ENCODE measurements at regions of chr10 and their contacts with region 1.

Region 1: GRCh38 chr10:102225646-102226541 is at the start of gene ELOVL3:
- DNase-seq: peak; percentile 96
- H3K4me3 ChIP-seq: peak within 1 kb of the TSS; percentile 5
- H3K27ac ChIP-seq: peak within 1 kb of the TSS; percentile 51
- H3K4me1 ChIP-seq: peaks cover 15% of the 10 kb centered on the region
- H3K27me3 ChIP-seq: peaks cover 10% of the 10 kb centered on the region
- CTCF ChIP-seq: no peak
- total RNA-seq, gene ELOVL3: 0.44 TPM in 1 of 2 replicates, not detected in the other

Region 2: DNA sequence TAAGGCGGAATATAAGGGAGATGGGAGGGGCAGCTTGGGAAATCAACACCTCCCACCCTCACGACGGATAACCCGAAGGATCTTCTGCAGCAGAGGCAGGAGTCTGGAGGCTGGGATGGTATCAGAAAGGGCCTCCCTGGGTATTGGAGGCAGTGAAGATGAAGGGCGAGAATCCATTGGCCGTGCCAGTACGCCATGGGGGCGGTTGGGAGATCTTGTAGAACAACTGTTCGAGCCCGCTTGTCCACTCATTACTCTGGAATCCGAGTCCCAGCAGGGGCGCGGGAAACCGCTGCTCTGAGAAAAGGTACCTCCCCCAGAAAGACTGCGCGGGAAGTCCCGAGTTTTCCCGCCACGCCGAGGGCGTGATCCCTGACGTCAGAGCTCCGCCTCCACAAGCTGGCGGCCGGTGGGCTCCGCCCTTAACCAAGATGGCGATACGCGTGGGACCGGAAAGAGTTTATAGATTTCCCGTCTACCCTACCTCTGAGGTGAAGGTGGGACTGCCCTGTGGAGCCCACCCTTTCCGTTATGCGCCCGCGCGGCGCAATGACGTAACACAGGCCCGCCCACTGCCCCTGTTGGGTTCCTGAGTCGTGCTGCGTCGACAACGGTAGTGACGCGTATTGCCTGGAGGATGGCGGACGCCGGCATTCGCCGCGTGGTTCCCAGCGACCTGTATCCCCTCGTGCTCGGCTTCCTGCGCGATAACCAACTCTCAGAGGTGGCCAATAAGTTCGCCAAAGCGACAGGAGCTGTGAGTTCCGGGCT is 73.9 kb before region 1 on chr10 and contains the start of gene NOLC1:
- CTCF ChIA-PET with region 1: no interaction called
- POLR2A ChIA-PET with region 1: interaction called, 14 read pairs
- intact Hi-C with region 1: no loop called
- DNase-seq: peak; percentile 99
- H3K4me3 ChIP-seq: peak within 1 kb of the TSS; percentile 73
- H3K27ac ChIP-seq: peak within 1 kb of the TSS; percentile 93
- H3K4me1 ChIP-seq: peaks cover 7% of the 10 kb centered on the region
- H3K27me3 ChIP-seq: no peaks in the 10 kb centered on the region
- CTCF ChIP-seq: no peak
- total RNA-seq, gene NOLC1: 194 and 225 TPM in 2 replicates

Region 3: GRCh38 chr10:102167861-102168260 is 58.0 kb before region 1 on chr10:
- CTCF ChIA-PET with region 1: interaction called, 11 read pairs
- POLR2A ChIA-PET with region 1: no interaction called
- intact Hi-C with region 1: loop called (anchors 2 kb)
- DNase-seq: no peak
- H3K4me3 ChIP-seq: no peak overlapping the region
- H3K27ac ChIP-seq: no peak overlapping the region
- H3K4me1 ChIP-seq: no peaks in the 10 kb centered on the region
- H3K27me3 ChIP-seq: no peaks in the 10 kb centered on the region
- CTCF ChIP-seq: no peak

Region 4: GRCh38 chr10:102200751-102201640 is 24.9 kb before region 1 on chr10:
- CTCF ChIA-PET with region 1: no interaction called
- POLR2A ChIA-PET with region 1: no interaction called
- intact Hi-C with region 1: no loop called
- DNase-seq: no peak
- H3K4me3 ChIP-seq: no peak overlapping the region
- H3K27ac ChIP-seq: no peak overlapping the region
- H3K4me1 ChIP-seq: no peaks in the 10 kb centered on the region
- H3K27me3 ChIP-seq: no peaks in the 10 kb centered on the region
- CTCF ChIP-seq: no peak

Region 5: GRCh38 chr10:102352066-102352715 is 126.3 kb after region 1 on chr10:
- CTCF ChIA-PET with region 1: interaction called, 65 read pairs
- POLR2A ChIA-PET with region 1: no interaction called
- intact Hi-C with region 1: loop called (anchors 1 kb)
- DNase-seq: peak; percentile 82
- H3K4me3 ChIP-seq: no peak overlapping the region
- H3K27ac ChIP-seq: no peak overlapping the region
- H3K4me1 ChIP-seq: no peaks in the 10 kb centered on the region
- H3K27me3 ChIP-seq: no peaks in the 10 kb centered on the region
- CTCF ChIP-seq: peak; percentile 96

Region 6: GRCh38 chr10:102399217-102400089 is 173.6 kb after region 1 on chr10:
- CTCF ChIA-PET with region 1: interaction called, 7 read pairs
- POLR2A ChIA-PET with region 1: no interaction called
- intact Hi-C with region 1: loop called (anchors 5 kb)
- DNase-seq: peak; percentile 89
- H3K4me3 ChIP-seq: peak overlapping the region; percentile 65
- H3K27ac ChIP-seq: peak overlapping the region; percentile 86
- H3K4me1 ChIP-seq: peaks cover 9% of the 10 kb centered on the region
- H3K27me3 ChIP-seq: no peaks in the 10 kb centered on the region
- CTCF ChIP-seq: peak; percentile 97

Region 7: DNA sequence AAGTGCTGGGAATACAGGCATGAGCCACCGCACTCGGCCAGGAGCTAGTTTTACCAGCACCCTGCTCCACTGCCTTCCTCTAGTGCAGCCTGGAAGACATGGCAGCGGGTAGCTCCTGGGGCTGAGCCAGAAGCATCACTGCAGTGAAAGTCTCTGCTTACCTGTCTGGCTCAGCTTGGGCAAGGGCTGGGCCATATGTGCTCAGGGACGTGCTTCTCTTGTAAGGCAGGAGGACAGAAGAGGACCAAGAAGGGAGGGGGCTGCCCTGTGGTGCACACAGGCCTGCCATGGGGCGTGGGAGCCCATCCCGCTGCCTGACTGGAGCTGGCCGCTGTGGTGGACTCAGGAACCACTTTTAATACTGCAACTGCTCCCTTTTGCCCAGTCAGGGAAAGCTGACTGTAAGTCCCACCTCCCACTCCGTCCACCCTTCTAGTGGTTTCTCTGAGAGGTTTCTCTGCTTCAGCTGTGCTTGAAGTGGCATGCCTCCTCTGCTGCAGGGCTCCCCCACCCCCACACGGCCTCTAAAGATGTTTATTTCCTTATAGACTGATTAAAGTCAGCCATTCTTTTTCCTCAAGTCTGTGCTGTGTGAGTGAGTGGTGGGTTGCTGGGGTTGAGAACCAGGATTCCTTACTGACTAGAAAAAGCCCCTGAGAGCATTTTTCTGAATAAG is 250.7 kb after region 1 on chr10:
- CTCF ChIA-PET with region 1: no interaction called
- POLR2A ChIA-PET with region 1: no interaction called
- intact Hi-C with region 1: loop called (anchors 2 kb)
- DNase-seq: no peak
- H3K4me3 ChIP-seq: no peak overlapping the region
- H3K27ac ChIP-seq: no peak overlapping the region
- H3K4me1 ChIP-seq: no peaks in the 10 kb centered on the region
- H3K27me3 ChIP-seq: no peaks in the 10 kb centered on the region
- CTCF ChIP-seq: no peak

Region 8: DNA sequence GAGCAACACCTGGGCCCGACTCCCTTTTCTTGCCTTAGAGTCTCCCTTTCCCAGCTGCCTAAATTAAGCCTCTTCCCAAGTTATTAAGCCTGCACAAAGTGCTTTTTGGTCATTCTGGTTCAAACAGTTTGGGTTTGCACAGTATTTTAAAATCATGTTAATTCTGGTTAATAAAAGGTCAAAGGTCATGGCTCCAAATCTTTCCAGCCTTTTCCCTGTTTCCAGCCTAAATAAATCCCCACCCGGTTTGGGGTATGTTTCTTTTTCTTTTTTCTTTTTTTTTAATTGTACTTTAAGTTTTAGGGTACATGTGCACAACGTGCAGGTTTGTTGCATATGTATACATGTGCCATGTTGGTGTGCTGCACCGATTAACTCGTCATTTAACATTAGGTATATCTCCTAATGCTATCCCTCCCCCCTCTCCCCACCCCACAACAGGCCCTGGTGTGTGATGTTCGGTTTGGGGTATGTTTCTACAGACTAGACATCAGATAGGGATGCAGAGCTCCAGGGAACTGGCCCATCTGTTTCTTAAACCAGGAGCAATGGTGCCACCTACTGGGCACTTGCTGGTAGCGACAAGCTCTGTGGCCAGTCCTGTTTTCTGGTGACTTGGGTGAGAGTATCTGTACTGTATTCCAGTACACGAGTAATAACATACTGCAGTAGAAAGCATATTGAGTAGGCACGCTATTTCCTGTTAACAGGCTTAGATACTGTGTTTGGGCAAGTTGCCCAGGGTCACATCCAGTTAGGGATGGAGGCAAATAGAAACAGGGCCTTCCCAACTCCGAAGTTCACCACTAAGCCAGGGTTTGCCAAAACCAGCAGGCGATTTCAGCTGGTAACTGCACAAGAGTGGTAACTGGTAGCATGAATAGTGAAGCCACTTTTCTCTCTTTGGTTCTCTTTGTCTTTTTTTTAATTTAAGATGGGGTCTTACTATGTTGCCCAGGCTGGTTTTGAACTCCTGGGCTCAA is 357.8 kb after region 1 on chr10:
- CTCF ChIA-PET with region 1: interaction called, 12 read pairs
- POLR2A ChIA-PET with region 1: no interaction called
- intact Hi-C with region 1: loop called (anchors 5 kb)
- DNase-seq: peak; percentile 90
- H3K4me3 ChIP-seq: no peak overlapping the region
- H3K27ac ChIP-seq: no peak overlapping the region
- H3K4me1 ChIP-seq: peaks cover 18% of the 10 kb centered on the region
- H3K27me3 ChIP-seq: no peaks in the 10 kb centered on the region
- CTCF ChIP-seq: peak; percentile 87

Measured in A673 (cell line).